Dorsolateral prefrontal cortex (tissue), 120 donors: ENCODE measurements at regions of chr21 and their contacts with region 1.

Region 1: DNA sequence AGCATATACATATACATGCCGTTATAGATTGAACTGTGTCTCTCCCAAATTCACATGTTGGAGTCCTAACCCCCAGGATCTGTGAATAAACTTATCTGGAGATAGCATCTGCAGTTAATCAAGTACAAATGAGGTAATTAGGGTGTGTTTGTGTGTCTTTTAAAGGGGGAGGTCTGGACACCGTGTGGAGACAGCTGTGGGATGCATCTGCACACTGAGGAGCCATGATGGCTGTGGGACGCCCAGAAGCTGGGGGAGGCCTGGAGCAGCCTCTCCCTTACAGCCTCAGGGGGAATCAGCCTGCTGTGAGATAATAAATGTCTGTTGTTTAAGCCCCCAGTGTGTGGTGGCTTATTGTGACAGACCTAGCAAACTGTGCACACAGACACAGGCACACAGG is 51.8 kb upstream of the COL18A1 start:
- DNase-seq: no peak
- H3K4me3 ChIP-seq: no peak overlapping the region
- H3K27ac ChIP-seq: no peak overlapping the region
- H3K27me3 ChIP-seq: peaks cover 0 to 8% (median 0%) of the 10 kb centered on the region in 45 donors
- CTCF ChIP-seq: no peak

Region 2: GRCh38 chr21:45333583-45334121 is 19.5 kb before region 1 on chr21:
- intact Hi-C with region 1: loop called in 1 of 2 experiments (anchors 2 kb)
- DNase-seq: peak in 4 of 10 donors; percentile 8 to 23 (median 14)
- H3K4me3 ChIP-seq: no peak overlapping the region
- H3K27ac ChIP-seq: no peak overlapping the region
- H3K27me3 ChIP-seq: peaks cover 0 to 17% (median 0%) of the 10 kb centered on the region in 45 donors
- CTCF ChIP-seq: no peak